ENCODE measurements at regions of chr1 and their contacts with region 1.

Region 1: DNA sequence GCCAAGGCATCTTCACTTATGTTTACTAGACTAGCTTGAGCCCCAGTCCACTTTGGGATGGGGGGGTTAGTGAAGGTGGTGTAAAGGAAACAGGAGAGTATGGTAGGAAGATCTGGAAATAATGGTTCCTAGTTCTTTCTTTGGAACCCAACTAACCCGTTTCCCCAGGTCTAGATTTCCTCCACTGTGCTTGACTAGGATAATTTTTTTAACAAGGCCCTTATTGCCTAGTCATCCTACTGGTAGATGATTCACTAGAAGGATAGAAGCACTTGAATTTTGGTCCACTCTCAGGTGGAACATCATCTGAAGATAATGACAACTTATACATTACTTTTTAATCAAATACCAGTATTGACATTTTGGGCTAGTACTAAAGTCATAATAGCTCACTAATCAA is 45.9 kb upstream of the MYOCOS start:
- DNase-seq: no peak
- ATAC-seq: no peak

Region 2: DNA sequence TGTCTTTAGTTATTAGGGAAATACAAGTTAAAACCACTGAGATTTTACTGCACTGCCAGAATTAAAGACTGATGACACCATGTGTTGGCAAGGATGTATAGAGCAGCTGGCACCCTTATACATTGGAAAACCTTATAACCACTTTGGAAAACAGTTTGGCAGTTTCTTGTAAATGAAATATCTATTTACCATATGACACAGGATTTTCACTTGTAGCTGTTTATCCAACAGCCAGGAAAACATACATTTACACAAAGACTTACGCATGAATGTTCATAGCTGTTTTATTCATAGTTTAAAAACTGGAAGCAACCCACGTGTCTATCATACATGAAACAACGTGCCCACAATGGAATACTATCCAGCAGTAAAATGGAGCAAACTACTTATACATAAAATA is 45.5 kb before region 1 on chr1:
- intact Hi-C with region 1: loop called (anchors 5 kb)
- DNase-seq: no peak
- ATAC-seq: no peak

Measured in Right ventricle myocardium superior (tissue), 1 donor.